ENCODE measurements at regions of chr22 and their contacts with region 1.

Region 1: GRCh38 chr22:38733329-38733723 is 22.5 kb downstream of the SUN2 start:
- DNase-seq: peak; percentile 69
- ATAC-seq: peak; percentile 68
- H3K4me3 ChIP-seq: no peak overlapping the region
- H3K4me3 Mint-ChIP-seq: no peak overlapping the region
- H3K27ac ChIP-seq: peak overlapping the region in 1 of 2 donors; percentile 61
- H3K27ac Mint-ChIP-seq: peak overlapping the region; percentile 78
- H3K4me1 ChIP-seq: peaks cover 0 to 18% of the 10 kb centered on the region in 2 donors
- H3K4me1 Mint-ChIP-seq: peaks cover 33% of the 10 kb centered on the region
- H3K27me3 ChIP-seq: no peaks in the 10 kb centered on the region
- H3K27me3 Mint-ChIP-seq: no peaks in the 10 kb centered on the region
- CTCF ChIP-seq: peak; percentile 84

Region 2: GRCh38 chr22:38748487-38749136 is 15.3 kb after region 1 on chr22:
- CTCF ChIA-PET with region 1: interaction called, 14 read pairs
- POLR2A ChIA-PET with region 1: interaction called, 15 read pairs
- intact Hi-C with region 1: no loop called
- DNase-seq: no peak
- ATAC-seq: no peak
- H3K4me3 ChIP-seq: no peak overlapping the region
- H3K4me3 Mint-ChIP-seq: no peak overlapping the region
- H3K27ac ChIP-seq: no peak overlapping the region
- H3K27ac Mint-ChIP-seq: peak overlapping the region; percentile 77
- H3K4me1 ChIP-seq: peaks cover 34 to 39% of the 10 kb centered on the region in 2 donors
- H3K4me1 Mint-ChIP-seq: peaks cover 31% of the 10 kb centered on the region
- H3K27me3 ChIP-seq: no peaks in the 10 kb centered on the region
- H3K27me3 Mint-ChIP-seq: no peaks in the 10 kb centered on the region
- CTCF ChIP-seq: no peak

Region 3: GRCh38 chr22:38766076-38766777 is 32.9 kb after region 1 on chr22:
- CTCF ChIA-PET with region 1: interaction called, 81 read pairs
- POLR2A ChIA-PET with region 1: interaction called, 3 read pairs
- intact Hi-C with region 1: loop called (anchors 1 kb)
- DNase-seq: peak; percentile 58
- ATAC-seq: peak; percentile 50
- H3K4me3 ChIP-seq: no peak overlapping the region
- H3K4me3 Mint-ChIP-seq: no peak overlapping the region
- H3K27ac ChIP-seq: no peak overlapping the region
- H3K27ac Mint-ChIP-seq: no peak overlapping the region
- H3K4me1 ChIP-seq: peaks cover 3 to 4% of the 10 kb centered on the region in 2 donors
- H3K4me1 Mint-ChIP-seq: peaks cover 6% of the 10 kb centered on the region
- H3K27me3 ChIP-seq: no peaks in the 10 kb centered on the region
- H3K27me3 Mint-ChIP-seq: no peaks in the 10 kb centered on the region
- CTCF ChIP-seq: peak; percentile 72

Region 4: GRCh38 chr22:38843201-38843715 is 109.9 kb after region 1 on chr22:
- CTCF ChIA-PET with region 1: interaction called, 12 read pairs
- POLR2A ChIA-PET with region 1: no interaction called
- intact Hi-C with region 1: no loop called
- DNase-seq: peak; percentile 77
- ATAC-seq: peak; percentile 78
- H3K4me3 ChIP-seq: peak overlapping the region in 2 of 5 experiments; percentile 23 to 29
- H3K4me3 Mint-ChIP-seq: peak overlapping the region; percentile 19
- H3K27ac ChIP-seq: no peak overlapping the region
- H3K27ac Mint-ChIP-seq: no peak overlapping the region
- H3K4me1 ChIP-seq: peaks cover 6 to 13% of the 10 kb centered on the region in 2 donors
- H3K4me1 Mint-ChIP-seq: peaks cover 11% of the 10 kb centered on the region
- H3K27me3 ChIP-seq: peaks cover 0 to 56% (median 27%) of the 10 kb centered on the region in 4 experiments
- H3K27me3 Mint-ChIP-seq: peaks cover 62% of the 10 kb centered on the region
- CTCF ChIP-seq: no peak

Measured in B cell (primary cell).